ENCODE measurements at regions of chrX and their contacts with region 1.

Region 1: DNA sequence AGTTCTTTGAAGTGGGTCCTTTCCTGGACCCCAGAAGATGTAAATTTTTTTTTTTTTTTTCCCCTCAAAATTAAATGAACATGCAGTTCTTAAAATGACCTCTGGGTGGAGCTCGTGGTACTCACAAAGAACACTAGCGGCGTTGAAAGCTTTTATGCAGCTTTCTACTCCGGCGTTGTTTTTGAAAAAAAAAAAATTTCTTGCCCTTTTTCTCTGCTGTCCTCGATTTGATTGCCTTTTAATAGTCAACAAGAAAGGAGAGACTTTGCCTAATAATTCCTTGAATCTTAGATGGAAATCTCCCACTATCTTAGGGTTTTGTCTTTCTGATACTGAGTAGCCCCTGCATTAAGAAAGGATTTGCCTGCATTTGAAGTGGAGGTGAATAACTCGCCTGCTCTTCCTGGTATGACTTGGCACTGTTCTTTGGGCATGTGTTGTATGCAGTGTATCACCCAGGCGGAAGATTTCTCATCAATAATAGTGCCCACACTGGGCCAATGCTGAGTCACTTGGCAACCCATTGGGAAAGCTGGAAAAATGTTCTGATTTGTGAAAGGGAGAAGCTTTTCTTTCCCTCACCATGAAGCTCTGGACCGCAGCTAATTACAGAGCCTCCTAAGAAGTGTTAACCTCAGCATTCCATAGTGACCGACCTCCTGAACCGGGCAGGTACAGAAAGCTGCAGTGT is 104.0 kb downstream of the PHEX start:
- DNase-seq: no peak

Region 2: GRCh38 chrX:21940356-21940829 is 195.7 kb before region 1 on chrX and contains the start of gene SMS:
- intact Hi-C with region 1: no loop called
- DNase-seq: peak; percentile 21 to 92 (median 62)

Region 3: DNA sequence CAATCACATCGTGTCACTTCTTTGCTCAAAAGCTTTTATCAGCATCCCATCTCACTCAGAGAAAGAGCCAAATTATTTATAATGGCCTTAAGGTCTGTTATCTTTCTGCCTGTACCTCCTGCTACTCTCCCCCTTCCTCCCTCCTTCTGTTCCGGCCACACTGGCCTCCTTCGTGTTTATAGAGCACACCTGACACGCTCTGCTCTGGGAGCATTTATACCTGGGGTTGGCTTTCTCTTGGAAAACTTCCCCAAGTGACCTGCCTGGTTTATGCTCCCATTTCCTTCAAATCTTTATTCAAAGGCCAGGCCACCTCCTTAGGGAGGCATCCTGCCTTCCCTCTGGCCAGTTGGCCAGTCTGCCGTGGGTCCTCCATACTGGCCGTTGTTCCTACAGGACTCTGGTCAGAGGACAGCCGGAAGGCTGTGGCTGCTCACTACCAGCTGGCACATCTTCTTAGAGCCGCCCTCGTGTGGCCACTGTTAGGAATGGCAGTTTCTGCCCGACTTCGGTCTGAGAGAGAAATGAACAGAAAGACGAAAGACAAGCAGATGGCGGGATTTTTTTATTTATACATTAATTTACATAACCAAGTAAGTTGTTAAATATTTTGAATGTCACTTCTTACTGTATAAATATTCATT is 56.4 kb after region 1 on chrX:
- intact Hi-C with region 1: loop called (anchors 2 kb)
- DNase-seq: peak; percentile 19 to 95 (median 58)

Region 4: GRCh38 chrX:22748093-22748999 is 612.2 kb after region 1 on chrX:
- intact Hi-C with region 1: loop called (anchors 5 kb)
- DNase-seq: peak in 7 of 10 donors; percentile 14 to 85 (median 34)

Region 5: GRCh38 chrX:23554304-23554703 is 1418.2 kb after region 1 on chrX:
- intact Hi-C with region 1: loop called (anchors 10 kb)
- DNase-seq: no peak